ENCODE measurements at regions of chr2 and their contacts with region 1.

Region 1: DNA sequence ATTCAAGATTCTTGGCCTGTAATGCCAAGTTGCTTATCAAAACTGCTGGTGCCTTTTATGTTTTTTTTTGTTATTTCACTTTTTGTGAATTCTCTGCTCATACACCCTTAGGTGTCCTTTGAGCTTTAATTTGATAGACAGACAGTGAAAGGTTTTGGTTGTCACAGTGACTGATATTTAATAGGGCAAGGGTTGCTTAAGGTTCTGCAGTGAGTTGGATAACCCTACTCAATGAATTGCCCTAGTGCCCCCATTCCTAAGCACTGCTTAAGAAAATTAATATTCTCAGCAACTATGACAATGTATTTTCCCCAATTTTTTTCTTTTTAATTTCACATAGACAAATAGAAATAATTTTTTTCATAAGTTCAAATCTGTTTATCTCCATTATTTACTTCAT is 15.4 kb downstream of the PPIG start:
- DNase-seq: no peak
- CTCF ChIP-seq: no peak

Region 2: GRCh38 chr2:169891593-169892298 is 292.2 kb after region 1 on chr2:
- CTCF ChIA-PET with region 1: no interaction called
- POLR2A ChIA-PET with region 1: interaction called, 17 read pairs
- DNase-seq: no peak
- CTCF ChIP-seq: no peak